ENCODE measurements at regions of chr1 and their contacts with region 1.

Region 1: DNA sequence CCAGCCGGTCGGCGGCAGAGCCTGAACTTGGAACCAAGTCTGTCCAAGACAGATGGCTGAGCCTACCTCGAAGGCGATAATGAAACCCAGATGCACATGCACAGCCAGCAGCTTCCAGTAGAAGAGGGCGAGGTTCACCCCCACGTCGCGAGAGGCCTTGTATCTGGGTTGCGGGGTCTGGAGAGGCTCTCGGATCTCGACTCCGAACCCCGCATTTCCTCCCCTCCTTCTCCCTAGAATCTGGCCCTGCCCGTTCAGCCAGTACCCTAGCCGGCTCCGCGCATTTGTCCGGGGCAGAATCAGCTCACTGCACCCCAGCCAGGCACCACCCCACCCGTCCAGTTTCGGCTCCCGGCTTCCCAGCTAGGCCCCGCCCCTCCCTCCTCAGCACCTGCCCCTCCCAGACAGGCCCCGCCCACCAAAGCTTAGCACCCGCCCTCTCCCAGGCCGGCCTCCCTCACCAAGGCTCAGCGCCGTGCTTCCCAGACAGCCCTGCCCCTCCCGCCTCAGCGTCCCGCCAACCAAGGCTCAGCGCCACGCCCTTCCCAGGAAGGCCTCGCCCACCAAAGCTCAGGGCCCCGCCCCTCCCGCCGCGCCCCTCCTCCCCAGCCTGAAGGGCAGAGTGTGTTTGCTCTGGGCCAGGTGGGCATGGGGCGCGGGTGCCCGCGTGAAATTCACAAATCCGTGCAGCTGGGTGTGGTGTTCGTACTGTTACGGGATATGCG is 4.8 kb upstream of the ARHGEF19 start:
- DNase-seq: peak; percentile 88
- ATAC-seq: peak; percentile 96
- H3K4me3 ChIP-seq: peak overlapping the region; percentile 53 to 78 (median 56)
- H3K27ac ChIP-seq: no peak overlapping the region
- H3K4me1 ChIP-seq: peaks cover 30% of the 10 kb centered on the region
- H3K27me3 ChIP-seq: 0 out of 5 replicates have a peak, but pooled peaks cover 0 to 4% of the 10 kb centered on the region in 2 experiments
- CTCF ChIP-seq: no peak
- EP300 ChIP-seq: no peak
- POLR2A ChIP-seq: no peak
- RAD21 ChIP-seq: no peak

Region 2: DNA sequence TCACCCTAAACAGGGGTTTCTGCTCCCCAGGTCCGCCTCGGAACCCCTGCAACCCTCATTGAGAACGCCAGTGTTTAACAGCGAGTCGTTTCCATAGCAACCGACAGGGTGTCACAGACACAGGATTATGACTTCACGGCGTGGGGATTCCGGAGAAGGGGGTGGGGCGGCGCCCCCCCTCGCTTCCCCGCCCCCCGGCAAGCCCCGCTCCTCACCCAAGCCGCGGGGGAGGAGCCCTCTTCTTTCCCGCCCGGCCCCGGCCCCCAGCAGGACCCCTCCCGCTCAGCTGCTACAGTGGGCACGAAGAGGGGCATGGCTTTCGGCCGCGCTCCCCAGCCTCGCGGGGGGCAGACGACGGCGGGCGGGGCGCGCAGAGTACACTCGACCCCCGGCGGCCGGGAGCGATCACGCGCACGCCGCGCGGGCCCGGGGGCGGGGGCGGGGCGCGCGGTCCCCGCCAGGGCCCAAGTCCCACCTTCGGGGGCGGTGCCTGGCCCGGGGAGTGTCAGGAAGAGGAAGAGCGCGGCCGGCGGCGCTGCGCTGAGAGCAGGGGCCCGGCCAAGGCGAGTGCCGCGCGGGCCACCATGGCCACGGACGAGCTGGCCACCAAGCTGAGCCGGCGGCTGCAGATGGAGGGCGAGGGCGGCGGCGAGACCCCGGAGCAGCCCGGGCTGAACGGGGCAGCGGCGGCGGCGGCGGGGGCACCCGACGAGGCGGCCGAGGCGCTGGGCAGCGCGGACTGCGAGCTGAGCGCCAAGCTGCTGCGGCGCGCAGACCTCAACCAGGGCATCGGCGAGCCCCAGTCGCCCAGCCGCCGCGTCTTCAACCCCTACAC is 807.6 kb before region 1 on chr1 and contains the start of gene EFHD2:
- CTCF ChIA-PET with region 1: no interaction called
- POLR2A ChIA-PET with region 1: no interaction called
- in situ Hi-C with region 1: no loop called
- intact Hi-C with region 1: no loop called
- DNase-seq: peak; percentile 54
- ATAC-seq: peak; percentile 89
- H3K4me3 ChIP-seq: peak within 1 kb of the TSS; percentile 77 to 83 (median 78)
- H3K27ac ChIP-seq: no peak within 1 kb of the TSS
- H3K4me1 ChIP-seq: peaks cover 35% of the 10 kb centered on the region
- H3K27me3 ChIP-seq: peaks cover 3 to 38% of the 10 kb centered on the region in 2 experiments; a peak in 3 of 5 replicates
- CTCF ChIP-seq: peak; percentile 16; the same call in 1 of the 2 replicates
- EP300 ChIP-seq: no peak
- POLR2A ChIP-seq: peak in 1 of 2 experiments; percentile 76; a peak in 2 of 4 replicates
- RAD21 ChIP-seq: 0 out of 2 replicates have a peak, but pooled peaks have one; percentile 36
- total RNA-seq, gene EFHD2: 9.9 and 12.7 TPM in 2 replicates

Region 3: GRCh38 chr1:15994590-15995351 is 222.5 kb before region 1 on chr1:
- CTCF ChIA-PET with region 1: no interaction called
- POLR2A ChIA-PET with region 1: no interaction called
- in situ Hi-C with region 1: no loop called
- intact Hi-C with region 1: no loop called
- DNase-seq: peak; percentile 56
- ATAC-seq: peak; percentile 92
- H3K4me3 ChIP-seq: peak overlapping the region; percentile 31 to 54 (median 35); a peak in 4 of 6 replicates
- H3K27ac ChIP-seq: peak overlapping the region; percentile 23
- H3K4me1 ChIP-seq: peaks cover 40% of the 10 kb centered on the region
- H3K27me3 ChIP-seq: peaks cover 6 to 33% of the 10 kb centered on the region in 2 experiments; a peak in 4 of 5 replicates
- CTCF ChIP-seq: peak; percentile 95
- EP300 ChIP-seq: no peak
- POLR2A ChIP-seq: no peak
- RAD21 ChIP-seq: peak; percentile 90

Region 4: GRCh38 chr1:16122916-16123315 is 94.3 kb before region 1 on chr1:
- CTCF ChIA-PET with region 1: no interaction called
- POLR2A ChIA-PET with region 1: no interaction called
- in situ Hi-C with region 1: no loop called
- intact Hi-C with region 1: no loop called
- DNase-seq: no peak
- ATAC-seq: no peak
- H3K4me3 ChIP-seq: no peak overlapping the region
- H3K27ac ChIP-seq: no peak overlapping the region
- H3K4me1 ChIP-seq: peaks cover 55% of the 10 kb centered on the region
- H3K27me3 ChIP-seq: peaks cover 0 to 3% of the 10 kb centered on the region in 2 experiments; a peak in 1 of 5 replicates
- CTCF ChIP-seq: no peak
- EP300 ChIP-seq: no peak
- POLR2A ChIP-seq: no peak
- RAD21 ChIP-seq: no peak

Region 5: DNA sequence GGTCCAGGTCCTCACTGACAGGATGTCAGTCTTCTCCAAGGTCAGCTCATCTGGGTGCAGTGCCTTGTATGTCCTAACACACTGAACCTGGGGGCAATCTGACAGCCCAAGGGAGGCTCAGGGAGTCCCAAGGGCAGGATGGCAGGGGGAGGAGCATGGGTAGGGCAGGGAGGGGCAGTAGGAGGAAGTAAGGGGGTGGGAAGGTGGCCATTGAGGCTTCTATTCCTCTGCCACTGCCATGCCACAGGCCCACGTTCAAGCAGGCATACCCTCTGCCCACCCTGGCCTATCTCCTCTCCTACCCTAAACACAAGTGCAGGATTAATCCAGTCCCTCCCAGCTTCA is 18.1 kb before region 1 on chr1:
- CTCF ChIA-PET with region 1: no interaction called
- POLR2A ChIA-PET with region 1: no interaction called
- in situ Hi-C with region 1: no loop called
- intact Hi-C with region 1: no loop called
- DNase-seq: no peak
- ATAC-seq: no peak
- H3K4me3 ChIP-seq: no peak overlapping the region
- H3K27ac ChIP-seq: no peak overlapping the region
- H3K4me1 ChIP-seq: no peaks in the 10 kb centered on the region; the same call in 1 of the 2 replicates
- H3K27me3 ChIP-seq: no peaks in the 10 kb centered on the region
- CTCF ChIP-seq: no peak
- EP300 ChIP-seq: no peak
- POLR2A ChIP-seq: no peak
- RAD21 ChIP-seq: no peak

Region 6: GRCh38 chr1:16236511-16237342 is 19.5 kb after region 1 on chr1 and contains the start of gene CPLANE2:
- CTCF ChIA-PET with region 1: no interaction called
- POLR2A ChIA-PET with region 1: interaction called, 5 read pairs
- in situ Hi-C with region 1: no loop called
- intact Hi-C with region 1: loop called (anchors 1 kb)
- DNase-seq: peak; percentile 79
- ATAC-seq: peak; percentile 85
- H3K4me3 ChIP-seq: peak within 1 kb of the TSS; percentile 66 to 79 (median 67)
- H3K27ac ChIP-seq: peak within 1 kb of the TSS; percentile 31
- H3K4me1 ChIP-seq: peaks cover 50% of the 10 kb centered on the region
- H3K27me3 ChIP-seq: no peaks in the 10 kb centered on the region
- CTCF ChIP-seq: peak; percentile 40
- EP300 ChIP-seq: no peak
- POLR2A ChIP-seq: peak; percentile 48 to 63; a peak in 3 of 4 replicates
- RAD21 ChIP-seq: no peak
- total RNA-seq, gene CPLANE2: 0.98 and 1.6 TPM in 2 replicates